Mammary epithelial cell (primary cell): ENCODE measurements at regions of chr4 and their contacts with region 1.

Region 1: DNA sequence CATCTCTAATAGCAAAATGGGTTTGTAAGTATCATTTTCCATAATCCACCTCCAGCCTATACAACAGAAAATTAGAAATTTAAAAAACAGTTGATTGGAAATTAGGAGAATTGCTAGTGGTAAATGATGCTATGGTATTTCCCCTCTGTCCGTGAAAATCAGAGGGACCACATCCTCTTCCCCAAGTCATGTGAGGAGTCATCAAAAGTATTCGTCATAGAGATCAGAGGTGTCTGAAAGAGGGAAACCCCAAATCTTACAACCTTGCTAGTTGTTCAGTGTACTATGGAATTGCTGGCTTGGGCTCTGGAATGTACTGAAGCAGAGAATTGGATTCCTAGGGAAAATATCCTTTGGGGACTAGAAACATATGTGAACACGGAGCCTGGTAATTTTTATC is 241.4 kb upstream of the ARHGAP24 start:
- DNase-seq: no peak
- H3K4me3 ChIP-seq: no peak overlapping the region
- H3K27ac ChIP-seq: no peak overlapping the region
- H3K4me1 ChIP-seq: no peaks in the 10 kb centered on the region
- H3K27me3 ChIP-seq: no peaks in the 10 kb centered on the region
- CTCF ChIP-seq: no peak

Region 2: DNA sequence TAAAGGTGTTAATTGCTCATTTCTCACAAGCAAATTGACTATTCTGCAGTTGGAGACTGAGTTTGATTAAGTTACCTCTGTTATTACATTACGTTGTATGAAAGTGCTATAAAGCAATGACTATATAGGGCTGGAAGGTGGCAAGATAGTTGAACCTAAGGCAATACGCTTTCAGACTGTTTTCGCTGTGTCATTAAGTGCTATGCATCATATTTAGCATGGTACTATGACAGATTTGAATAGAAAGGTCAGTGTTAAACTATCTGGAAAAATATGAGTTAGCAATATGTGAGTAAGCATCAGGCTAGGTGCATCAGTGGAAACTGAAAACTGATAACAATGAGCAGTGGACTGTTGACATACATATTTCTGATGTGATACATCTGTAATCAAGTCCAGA is 35.4 kb after region 1 on chr4:
- CTCF ChIA-PET with region 1: no interaction called
- dilution Hi-C with region 1: loop called (anchors 5 kb)
- in situ Hi-C with region 1: no loop called
- intact Hi-C with region 1: no loop called
- DNase-seq: no peak
- H3K4me3 ChIP-seq: no peak overlapping the region
- H3K27ac ChIP-seq: no peak overlapping the region
- H3K4me1 ChIP-seq: no peaks in the 10 kb centered on the region
- H3K27me3 ChIP-seq: no peaks in the 10 kb centered on the region
- CTCF ChIP-seq: no peak